Heart right ventricle (tissue), 16 donors: ENCODE measurements at regions of chr19 and their contacts with region 1.

Region 1: DNA sequence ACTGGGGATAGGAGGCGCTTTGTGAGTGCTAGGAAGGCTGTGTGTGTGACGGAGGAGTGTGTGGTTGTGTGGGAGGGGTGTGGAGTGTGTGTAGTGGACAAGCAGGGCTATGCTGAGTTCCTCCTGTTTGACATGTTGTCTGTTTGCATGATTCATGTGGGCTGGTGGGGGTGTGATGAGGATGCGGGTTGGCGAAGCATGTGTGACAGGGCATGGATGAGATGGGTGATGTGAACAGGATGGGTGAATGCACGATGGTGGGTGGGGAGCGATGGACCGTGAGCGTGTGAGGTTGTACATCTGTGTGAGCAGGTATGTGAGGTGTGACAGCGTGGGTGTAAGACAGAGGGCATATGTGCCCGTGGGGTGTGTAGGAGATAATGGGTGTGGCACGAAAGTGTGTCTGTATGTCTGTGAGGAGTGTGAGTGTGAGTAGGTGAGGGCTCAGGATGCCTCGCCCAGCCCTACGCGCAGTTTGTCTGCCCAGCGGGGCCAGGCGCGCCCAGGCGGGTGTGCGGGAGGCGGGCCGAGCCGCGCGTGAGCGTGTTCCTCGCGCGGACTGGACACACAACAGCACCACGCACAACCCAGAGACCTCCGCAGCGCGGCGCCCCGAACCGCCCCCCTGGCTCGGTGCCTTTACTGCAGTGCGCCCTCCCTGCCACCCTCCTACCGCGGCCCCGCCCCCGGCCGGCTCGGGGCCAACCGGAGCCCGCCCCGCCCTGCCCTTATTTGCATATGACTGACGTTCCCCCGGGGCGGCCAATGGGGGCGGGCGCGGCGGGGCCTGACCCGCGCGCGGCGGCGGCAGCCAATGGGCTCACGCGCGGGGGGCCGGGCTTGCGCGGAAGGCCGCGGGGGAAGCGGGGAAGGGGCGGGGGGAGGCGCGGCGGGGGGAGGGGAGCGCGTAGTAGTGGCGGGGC is 14.4 kb downstream of the CIC start:
- DNase-seq: peak; percentile 96 to 98
- ATAC-seq: peak; percentile 58 to 74 (median 68)
- H3K4me3 ChIP-seq: peak overlapping the region in 9 of 10 donors; percentile 34 to 88 (median 60)
- H3K27ac ChIP-seq: peak overlapping the region; percentile 91 to 99 (median 98)
- H3K4me1 ChIP-seq: peaks cover 34 to 74% (median 67%) of the 10 kb centered on the region in 9 donors
- H3K27me3 ChIP-seq: no peaks in the 10 kb centered on the region
- CTCF ChIP-seq: peak in 1 of 9 donors; percentile 17

Region 2: GRCh38 chr19:42023121-42023942 is 260.1 kb before region 1 on chr19:
- intact Hi-C with region 1: no loop called
- DNase-seq: no peak
- ATAC-seq: peak in 2 of 8 donors; percentile 38 to 47
- H3K4me3 ChIP-seq: no peak overlapping the region
- H3K27ac ChIP-seq: peak overlapping the region in 1 of 10 donors; percentile 81
- H3K4me1 ChIP-seq: peaks cover 0 to 35% (median 15%) of the 10 kb centered on the region in 9 donors
- H3K27me3 ChIP-seq: no peaks in the 10 kb centered on the region
- CTCF ChIP-seq: peak in 4 of 9 donors; percentile 12 to 38 (median 26)

Region 3: DNA sequence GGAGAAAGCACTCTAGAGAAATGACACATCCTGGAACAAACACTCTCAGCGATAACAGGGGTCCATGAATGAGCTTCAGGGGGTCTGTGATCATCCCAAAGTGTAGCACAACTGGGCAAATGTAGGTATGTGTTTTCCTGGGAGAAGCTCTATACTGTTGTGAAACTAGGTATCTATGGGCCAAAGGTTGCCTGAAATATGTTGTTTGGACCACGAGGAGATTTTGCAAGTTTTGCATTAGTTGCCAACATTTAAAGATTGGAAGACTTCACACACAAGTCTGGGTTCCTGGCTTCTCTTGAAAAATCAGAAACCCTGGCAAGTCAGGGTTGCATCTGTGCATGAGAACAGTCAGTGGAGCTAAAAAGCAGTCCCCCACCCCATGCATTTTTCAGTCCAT is 124.5 kb before region 1 on chr19:
- intact Hi-C with region 1: no loop called
- DNase-seq: no peak
- ATAC-seq: no peak
- H3K4me3 ChIP-seq: no peak overlapping the region
- H3K27ac ChIP-seq: no peak overlapping the region
- H3K4me1 ChIP-seq: no peaks in the 10 kb centered on the region
- H3K27me3 ChIP-seq: peaks cover 0 to 67% (median 33%) of the 10 kb centered on the region in 7 donors
- CTCF ChIP-seq: no peak

Region 4: DNA sequence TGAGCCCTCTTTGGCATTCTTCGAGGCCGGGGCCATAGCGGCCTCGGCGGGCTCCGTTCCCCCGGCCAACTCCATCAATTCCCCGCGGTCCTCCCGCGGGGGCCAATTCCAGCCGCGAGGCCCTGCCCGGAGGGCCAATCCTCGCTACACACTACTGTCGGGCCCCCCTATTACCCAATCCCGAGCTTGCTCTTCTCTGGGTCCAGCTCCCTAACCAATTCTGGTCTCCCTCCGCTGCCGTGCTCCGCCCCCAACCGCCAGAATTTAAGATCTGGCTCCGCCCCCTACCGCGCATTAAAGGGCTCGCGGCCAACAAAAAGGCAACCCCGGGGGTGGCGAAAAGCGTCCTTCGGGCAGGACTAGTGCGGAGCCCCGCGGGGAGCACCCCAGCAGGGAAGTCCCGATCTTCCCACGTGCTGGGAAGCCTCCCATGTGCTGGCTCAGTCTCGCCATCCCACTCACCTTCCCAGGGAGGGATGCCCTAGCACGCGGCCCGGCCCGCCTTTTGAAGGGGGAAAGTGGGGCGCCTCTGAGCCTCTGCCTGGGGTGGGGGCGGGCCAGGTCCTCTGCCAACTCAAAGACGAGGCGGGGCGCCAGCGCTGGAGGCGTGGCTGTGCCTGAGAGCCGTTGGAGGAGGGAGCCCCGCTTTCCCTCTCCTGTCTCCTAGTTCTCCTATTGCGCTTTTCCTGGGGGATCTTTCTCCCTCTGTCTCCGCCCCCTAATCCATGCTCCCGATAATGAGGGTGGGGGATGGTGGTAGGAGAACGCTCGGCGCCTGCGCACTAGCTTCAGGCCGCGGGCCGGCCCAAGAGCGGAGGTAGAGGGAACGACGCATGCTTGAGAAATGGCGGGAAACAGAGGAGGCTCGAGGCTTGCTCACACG is 140.3 kb after region 1 on chr19:
- intact Hi-C with region 1: loop called in 1 of 10 experiments (anchors 5 kb)
- DNase-seq: peak; percentile 88 to 92
- ATAC-seq: peak; percentile 87 to 94 (median 93)
- H3K4me3 ChIP-seq: peak overlapping the region; percentile 39 to 89 (median 75)
- H3K27ac ChIP-seq: peak overlapping the region; percentile 73 to 94 (median 92)
- H3K4me1 ChIP-seq: peaks cover 3 to 78% (median 58%) of the 10 kb centered on the region in 9 donors
- H3K27me3 ChIP-seq: peaks cover 0 to 16% (median 0%) of the 10 kb centered on the region in 7 donors
- CTCF ChIP-seq: peak in 1 of 9 donors; percentile 7